GM12878 (cell line): ENCODE measurements at regions of chr14 and their contacts with region 1.

Region 1: DNA sequence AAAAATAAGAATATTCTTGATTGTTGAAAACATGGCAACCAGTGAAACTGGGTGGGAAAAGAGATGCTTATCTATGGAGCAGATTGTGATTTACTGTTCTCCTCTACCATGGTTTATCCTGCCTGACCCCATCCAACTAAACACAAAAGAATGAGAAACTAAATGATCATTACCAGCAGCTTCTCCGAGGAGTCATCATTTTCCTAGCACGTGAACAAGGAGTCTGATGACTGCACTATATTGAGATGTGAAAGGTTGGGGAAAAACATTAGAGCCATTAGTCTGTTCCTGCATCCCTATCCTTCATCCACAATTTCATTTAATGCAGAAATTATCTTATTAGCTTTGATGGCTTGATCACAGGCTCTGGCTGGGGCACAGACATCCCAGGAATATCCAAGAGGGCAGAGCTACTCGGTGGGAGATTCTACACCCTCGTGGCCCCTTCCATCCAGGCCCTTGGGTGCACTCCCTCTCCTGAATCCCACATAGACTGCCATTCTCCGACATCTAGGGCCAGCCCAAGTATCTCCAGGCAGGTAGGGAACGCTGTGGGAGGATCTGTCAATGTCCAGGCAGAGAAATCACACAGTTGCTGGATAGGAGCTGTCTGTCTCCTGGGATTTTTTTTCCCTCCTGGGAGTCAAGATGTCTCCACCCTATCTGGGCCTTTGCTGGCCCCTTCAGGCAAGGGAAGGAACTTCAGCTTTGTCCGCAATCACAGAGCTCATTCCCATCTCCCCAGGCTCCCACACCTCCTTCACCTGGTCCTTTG is 43.3 kb upstream of the DHRS4 start:
- DNase-seq: no peak
- ATAC-seq: peak; percentile 84
- H3K4me3 ChIP-seq: no peak overlapping the region
- H3K27ac ChIP-seq: no peak overlapping the region
- H3K4me1 ChIP-seq: no peaks in the 10 kb centered on the region
- H3K27me3 ChIP-seq: peaks cover 0 to 2% of the 10 kb centered on the region in 2 experiments; a peak in 2 of 4 replicates
- CTCF ChIP-seq: peak; percentile 81 to 82 (median 81)
- EP300 ChIP-seq: no peak
- POLR2A ChIP-seq: no peak
- RAD21 ChIP-seq: peak; percentile 84

Region 2: DNA sequence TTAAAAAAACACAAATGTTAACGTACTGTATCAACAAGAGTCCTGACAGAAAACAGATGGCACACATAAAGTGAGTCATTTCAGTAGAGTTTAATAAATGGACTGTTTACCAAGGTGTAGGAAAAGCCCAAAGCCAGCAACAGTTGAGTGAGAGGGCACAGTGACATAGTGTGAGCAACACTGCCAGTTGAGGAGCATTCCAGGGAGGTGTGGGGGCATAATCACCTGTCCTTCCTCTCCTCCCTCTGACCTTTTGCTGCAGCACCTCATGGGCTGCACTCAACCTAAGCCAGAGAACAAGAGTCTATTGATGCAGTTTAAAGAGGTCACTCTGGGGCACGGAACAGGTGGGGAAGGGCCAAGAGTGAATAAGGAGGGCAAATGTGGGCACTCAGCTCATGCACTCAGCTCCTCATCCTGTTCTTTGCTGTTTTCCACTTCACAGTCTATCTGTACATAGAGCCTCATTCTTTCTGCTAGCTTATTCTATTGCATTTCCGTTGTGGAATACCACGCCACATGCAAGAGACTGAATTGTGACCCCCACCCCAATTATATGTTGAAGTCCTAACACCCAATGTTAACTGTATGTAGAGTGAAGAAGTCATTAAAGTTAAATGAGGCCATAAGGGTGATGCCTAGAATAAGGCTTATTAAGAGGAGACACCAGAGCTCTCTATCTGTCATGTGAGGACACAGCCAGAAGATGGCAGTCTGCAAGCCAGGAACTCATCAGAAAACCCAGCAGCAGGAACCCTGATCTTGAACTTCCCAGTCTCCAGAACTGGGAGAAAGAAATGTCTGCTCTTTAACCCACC is 244.7 kb before region 1 on chr14:
- CTCF ChIA-PET with region 1: interaction called, 14 read pairs
- POLR2A ChIA-PET with region 1: no interaction called
- RAD21 ChIA-PET with region 1: interaction called, 14 read pairs
- SMC1A ChIA-PET with region 1: interaction called, 11 read pairs
- in situ Hi-C with region 1: no loop called
- intact Hi-C with region 1: no loop called
- DNase-seq: no peak
- ATAC-seq: peak; percentile 85
- H3K4me3 ChIP-seq: no peak overlapping the region
- H3K27ac ChIP-seq: no peak overlapping the region
- H3K4me1 ChIP-seq: no peaks in the 10 kb centered on the region
- H3K27me3 ChIP-seq: no peaks in the 10 kb centered on the region; a peak in 1 of 4 replicates
- CTCF ChIP-seq: peak; percentile 55 to 76 (median 69)
- EP300 ChIP-seq: no peak
- POLR2A ChIP-seq: no peak
- RAD21 ChIP-seq: peak; percentile 66

Region 3: GRCh38 chr14:23727566-23728335 is 182.5 kb before region 1 on chr14:
- CTCF ChIA-PET with region 1: interaction called, 6 read pairs
- POLR2A ChIA-PET with region 1: no interaction called
- RAD21 ChIA-PET with region 1: interaction called, 3 read pairs
- SMC1A ChIA-PET with region 1: interaction called, 4 read pairs
- in situ Hi-C with region 1: loop called (anchors 10 kb)
- intact Hi-C with region 1: loop called (anchors 1 kb)
- DNase-seq: no peak
- ATAC-seq: peak; percentile 88
- H3K4me3 ChIP-seq: no peak overlapping the region
- H3K27ac ChIP-seq: no peak overlapping the region
- H3K4me1 ChIP-seq: no peaks in the 10 kb centered on the region
- H3K27me3 ChIP-seq: no peaks in the 10 kb centered on the region
- CTCF ChIP-seq: peak; percentile 22 to 24 (median 22); a peak in 3 of 6 replicates
- EP300 ChIP-seq: no peak
- POLR2A ChIP-seq: no peak
- RAD21 ChIP-seq: peak; percentile 65

Region 4: GRCh38 chr14:23929822-23930294 is 19.6 kb after region 1 on chr14:
- CTCF ChIA-PET with region 1: interaction called, 5 read pairs
- POLR2A ChIA-PET with region 1: no interaction called
- RAD21 ChIA-PET with region 1: interaction called, 4 read pairs
- SMC1A ChIA-PET with region 1: interaction called, 11 read pairs
- in situ Hi-C with region 1: no loop called
- intact Hi-C with region 1: no loop called
- DNase-seq: peak; percentile 25
- ATAC-seq: peak; percentile 99
- H3K4me3 ChIP-seq: no peak overlapping the region
- H3K27ac ChIP-seq: no peak overlapping the region
- H3K4me1 ChIP-seq: no peaks in the 10 kb centered on the region
- H3K27me3 ChIP-seq: no peaks in the 10 kb centered on the region; a peak in 1 of 4 replicates
- CTCF ChIP-seq: peak; percentile 84 to 97 (median 96)
- EP300 ChIP-seq: no peak
- POLR2A ChIP-seq: no peak
- RAD21 ChIP-seq: peak; percentile 80